ENCODE measurements at regions of chr3 and their contacts with region 1.

Region 1: GRCh38 chr3:58188173-58188564 is 22.6 kb downstream of the DNASE1L3 start:
- DNase-seq: peak; percentile 82
- H3K4me3 ChIP-seq: no peak overlapping the region
- H3K27ac ChIP-seq: no peak overlapping the region
- H3K4me1 ChIP-seq: peaks cover 9% of the 10 kb centered on the region
- H3K27me3 ChIP-seq: no peaks in the 10 kb centered on the region
- CTCF ChIP-seq: no peak

Region 2: GRCh38 chr3:58135712-58136543 is 52.2 kb before region 1 on chr3:
- CTCF ChIA-PET with region 1: no interaction called
- dilution Hi-C with region 1: no loop called
- in situ Hi-C with region 1: no loop called
- intact Hi-C with region 1: no loop called
- DNase-seq: no peak
- H3K4me3 ChIP-seq: no peak overlapping the region
- H3K27ac ChIP-seq: no peak overlapping the region
- H3K4me1 ChIP-seq: no peaks in the 10 kb centered on the region
- H3K27me3 ChIP-seq: no peaks in the 10 kb centered on the region
- CTCF ChIP-seq: peak; percentile 13 to 18

Region 3: DNA sequence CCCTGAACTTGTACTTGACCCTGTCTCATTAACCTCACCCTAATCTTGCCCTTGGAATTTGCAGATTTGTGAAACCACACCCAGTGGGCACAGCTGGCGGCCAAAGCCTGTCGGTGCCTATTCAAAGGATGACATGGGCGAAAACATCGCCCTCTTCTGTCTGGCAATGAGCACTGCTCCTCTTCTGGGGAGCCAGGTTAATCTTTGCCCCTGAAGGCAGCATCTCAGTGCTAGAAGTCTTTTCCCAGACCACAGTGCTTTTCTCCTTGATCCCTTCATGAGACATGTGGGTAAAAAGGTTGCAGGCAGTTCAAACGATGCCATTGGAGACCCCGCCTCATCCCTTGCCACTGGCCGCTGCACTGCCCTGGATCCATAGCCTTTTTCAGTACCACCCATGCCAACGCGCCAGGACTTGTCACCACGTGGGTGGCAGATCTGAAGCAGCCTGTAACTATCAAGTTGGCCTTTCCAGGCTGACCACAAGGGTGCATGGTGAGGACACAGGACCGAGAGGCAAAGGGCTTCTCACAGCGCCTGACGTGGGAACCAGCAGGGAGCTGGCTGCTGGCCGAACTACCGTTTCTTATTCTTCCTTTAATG is 29.1 kb after region 1 on chr3:
- CTCF ChIA-PET with region 1: interaction called, 43 read pairs
- dilution Hi-C with region 1: loop called (anchors 5 kb)
- in situ Hi-C with region 1: no loop called
- intact Hi-C with region 1: loop called (anchors 1 kb)
- DNase-seq: peak; percentile 95
- H3K4me3 ChIP-seq: peak overlapping the region in 2 of 3 experiments; percentile 4 to 25
- H3K27ac ChIP-seq: peak overlapping the region; percentile 77
- H3K4me1 ChIP-seq: peaks cover 51% of the 10 kb centered on the region
- H3K27me3 ChIP-seq: no peaks in the 10 kb centered on the region
- CTCF ChIP-seq: peak; percentile 89 to 95

Region 4: DNA sequence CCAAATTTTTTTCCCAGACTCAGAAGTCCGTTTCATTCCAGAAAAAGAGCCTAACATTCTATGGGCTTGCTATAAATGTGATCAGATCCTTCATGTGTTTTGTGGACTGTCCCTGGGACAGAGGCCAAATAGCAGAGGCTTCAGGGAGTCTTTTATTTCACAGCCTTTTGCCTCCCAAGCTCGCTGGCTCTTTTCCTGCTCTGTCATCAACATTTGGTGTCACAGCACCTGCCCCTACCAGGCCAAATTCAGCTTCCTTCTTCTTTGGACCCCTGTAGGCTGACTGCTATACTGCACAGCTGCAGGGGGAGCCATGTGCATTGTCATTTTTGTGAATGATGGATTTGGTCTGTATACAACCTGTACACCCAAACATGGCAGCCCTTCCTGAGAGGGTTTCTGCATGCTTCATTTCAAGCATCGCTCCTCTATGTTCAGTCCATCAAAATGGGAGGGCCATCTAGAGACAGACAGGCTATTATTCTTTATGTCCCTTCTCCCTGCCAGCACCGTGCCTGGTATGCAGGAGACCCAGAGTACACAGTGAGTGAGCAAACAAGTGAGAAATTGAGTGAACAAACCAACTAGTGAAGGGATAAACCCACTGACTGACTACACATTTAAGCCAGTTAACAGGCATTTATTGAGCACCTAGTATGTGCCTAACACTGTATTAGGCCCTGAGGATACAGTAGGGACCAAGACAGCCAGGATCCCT is 100.0 kb after region 1 on chr3:
- CTCF ChIA-PET with region 1: no interaction called
- dilution Hi-C with region 1: loop called (anchors 10 kb)
- in situ Hi-C with region 1: no loop called
- intact Hi-C with region 1: no loop called
- DNase-seq: no peak
- H3K4me3 ChIP-seq: no peak overlapping the region
- H3K27ac ChIP-seq: no peak overlapping the region
- H3K4me1 ChIP-seq: no peaks in the 10 kb centered on the region
- H3K27me3 ChIP-seq: no peaks in the 10 kb centered on the region
- CTCF ChIP-seq: no peak

Region 5: DNA sequence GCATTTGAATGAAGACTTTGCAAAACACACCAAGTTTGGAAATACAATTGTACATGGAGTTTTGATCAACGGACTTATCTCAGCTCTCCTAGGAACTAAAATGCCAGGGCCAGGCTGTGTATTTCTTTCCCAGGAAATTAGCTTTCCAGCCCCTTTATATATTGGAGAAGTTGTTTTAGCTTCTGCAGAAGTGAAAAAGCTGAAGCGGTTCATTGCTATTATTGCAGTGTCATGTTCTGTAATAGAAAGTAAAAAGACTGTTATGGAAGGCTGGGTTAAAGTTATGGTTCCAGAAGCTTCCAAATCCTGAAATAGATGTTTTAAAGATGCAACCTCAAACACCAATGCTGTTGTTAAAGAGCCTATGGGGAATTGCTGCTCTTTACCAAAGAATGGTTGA is 129.6 kb after region 1 on chr3:
- CTCF ChIA-PET with region 1: interaction called, 10 read pairs
- dilution Hi-C with region 1: no loop called
- in situ Hi-C with region 1: no loop called
- intact Hi-C with region 1: no loop called
- DNase-seq: no peak
- H3K4me3 ChIP-seq: no peak overlapping the region
- H3K27ac ChIP-seq: no peak overlapping the region
- H3K4me1 ChIP-seq: no peaks in the 10 kb centered on the region
- H3K27me3 ChIP-seq: no peaks in the 10 kb centered on the region
- CTCF ChIP-seq: no peak

Region 6: DNA sequence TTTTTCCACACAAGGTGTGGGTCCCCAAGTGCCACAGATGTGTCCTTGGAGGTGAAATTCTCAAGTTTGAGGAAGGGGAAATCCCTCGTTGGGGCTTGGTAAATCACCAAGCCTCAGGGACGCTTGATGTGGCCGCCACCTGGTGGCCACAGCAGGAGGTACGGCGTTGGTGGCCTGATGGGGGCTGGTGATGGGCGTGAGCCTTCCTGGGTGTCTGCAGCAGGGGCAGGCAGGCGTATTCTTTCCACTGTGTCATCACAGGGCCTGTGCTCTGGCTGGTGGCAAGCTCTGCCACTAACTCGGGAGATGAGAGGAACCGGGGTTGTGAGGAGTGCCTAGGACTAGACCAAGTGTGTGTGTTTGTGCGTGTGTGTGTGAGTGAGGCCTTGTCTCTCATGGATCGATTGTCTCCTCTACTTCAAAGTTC is 344.6 kb after region 1 on chr3:
- CTCF ChIA-PET with region 1: no interaction called
- dilution Hi-C with region 1: no loop called
- in situ Hi-C with region 1: no loop called
- intact Hi-C with region 1: loop called (anchors 5 kb)
- DNase-seq: peak; percentile 56
- H3K4me3 ChIP-seq: no peak overlapping the region
- H3K27ac ChIP-seq: no peak overlapping the region
- H3K4me1 ChIP-seq: peaks cover 21% of the 10 kb centered on the region
- H3K27me3 ChIP-seq: no peaks in the 10 kb centered on the region
- CTCF ChIP-seq: peak; percentile 83 to 97

Region 7: GRCh38 chr3:58857402-58857801 is 669.2 kb after region 1 on chr3:
- CTCF ChIA-PET with region 1: no interaction called
- dilution Hi-C with region 1: no loop called
- in situ Hi-C with region 1: no loop called
- intact Hi-C with region 1: no loop called
- DNase-seq: no peak
- H3K4me3 ChIP-seq: no peak overlapping the region
- H3K27ac ChIP-seq: no peak overlapping the region
- H3K4me1 ChIP-seq: no peaks in the 10 kb centered on the region
- H3K27me3 ChIP-seq: no peaks in the 10 kb centered on the region
- CTCF ChIP-seq: no peak